GM12878 (cell line): ENCODE measurements at regions of chr11 and their contacts with region 1.

Region 1: DNA sequence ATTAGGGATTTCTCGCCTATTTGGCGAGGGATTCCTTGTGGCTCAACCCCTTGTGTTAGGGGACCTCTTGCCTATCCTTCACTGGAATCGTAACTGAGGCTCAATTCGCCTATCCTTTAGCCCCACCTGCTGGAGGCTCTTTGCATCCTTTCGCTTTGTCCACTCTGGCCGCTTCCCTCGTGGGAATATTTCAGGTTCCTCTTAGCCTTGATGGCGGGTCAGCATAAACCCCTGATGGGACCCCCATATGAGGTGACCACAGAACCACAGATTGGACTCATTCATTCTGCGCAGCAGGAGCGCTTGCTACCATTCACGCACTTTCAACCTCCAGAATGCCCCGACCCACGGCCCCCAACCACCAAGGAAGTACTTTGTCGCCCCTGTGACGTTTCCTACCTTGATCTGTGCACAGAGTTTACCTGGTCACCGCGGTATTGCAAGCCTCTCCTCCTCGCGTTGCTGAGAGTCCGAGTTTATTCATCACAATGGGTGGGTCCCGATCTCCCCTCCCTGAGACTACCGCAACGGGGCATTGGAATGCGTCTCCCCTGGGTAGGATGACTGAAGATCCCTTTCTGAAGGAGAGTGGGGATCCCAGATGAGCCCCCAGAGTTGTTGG is at the start of gene OR52N2:
- DNase-seq: peak; percentile 53
- ATAC-seq: peak; percentile 98
- H3K4me3 ChIP-seq: peak within 1 kb of the TSS; percentile 68
- H3K27ac ChIP-seq: no peak within 1 kb of the TSS
- H3K4me1 ChIP-seq: no peaks in the 10 kb centered on the region
- H3K27me3 ChIP-seq: no peaks in the 10 kb centered on the region
- CTCF ChIP-seq: peak; percentile 78 to 92 (median 83)
- EP300 ChIP-seq: no peak
- POLR2A ChIP-seq: no peak
- RAD21 ChIP-seq: peak; percentile 97
- polyA plus RNA-seq, gene OR52N2: 0.24 to 0.40 TPM

Region 2: GRCh38 chr11:5380740-5381342 is 427.8 kb before region 1 on chr11:
- CTCF ChIA-PET with region 1: no interaction called
- POLR2A ChIA-PET with region 1: no interaction called
- RAD21 ChIA-PET with region 1: no interaction called
- SMC1A ChIA-PET with region 1: no interaction called
- in situ Hi-C with region 1: no loop called
- intact Hi-C with region 1: loop called (anchors 5 kb)
- DNase-seq: no peak
- ATAC-seq: peak; percentile 98
- H3K4me3 ChIP-seq: no peak overlapping the region
- H3K27ac ChIP-seq: no peak overlapping the region
- H3K4me1 ChIP-seq: no peaks in the 10 kb centered on the region
- H3K27me3 ChIP-seq: no peaks in the 10 kb centered on the region
- CTCF ChIP-seq: peak; percentile 71 to 83 (median 80)
- EP300 ChIP-seq: no peak
- POLR2A ChIP-seq: no peak
- RAD21 ChIP-seq: peak; percentile 83

Region 3: DNA sequence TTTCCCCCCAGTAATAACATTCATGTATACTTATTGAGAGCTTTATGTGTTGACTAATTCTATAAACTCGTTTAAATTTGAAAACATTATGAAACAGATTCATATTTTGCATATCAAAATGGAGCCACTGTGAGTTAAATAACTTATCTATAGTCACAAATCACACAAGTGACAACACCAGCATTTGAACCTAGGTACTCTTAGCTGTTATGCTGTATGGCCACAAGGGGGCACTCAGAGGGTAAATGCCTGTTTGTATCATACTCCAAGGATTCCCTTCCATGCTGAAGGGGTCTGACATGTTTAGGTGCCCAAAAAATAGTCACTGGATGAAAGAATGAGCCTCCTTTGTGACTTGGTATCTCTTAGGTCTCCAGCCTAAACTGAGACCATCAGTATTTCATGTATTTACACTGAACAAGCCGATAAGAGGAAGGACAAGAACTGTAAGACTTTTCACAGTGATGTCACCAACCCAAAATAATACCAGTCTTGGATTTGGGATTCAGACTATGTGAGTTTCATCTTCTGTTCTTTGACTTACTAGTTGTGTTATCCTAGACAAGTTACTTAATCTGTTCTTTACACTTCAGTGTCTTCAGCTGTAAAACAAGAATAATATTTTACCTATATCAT is 332.3 kb before region 1 on chr11:
- CTCF ChIA-PET with region 1: interaction called, 20 read pairs
- POLR2A ChIA-PET with region 1: no interaction called
- RAD21 ChIA-PET with region 1: interaction called, 8 read pairs
- SMC1A ChIA-PET with region 1: interaction called, 8 read pairs
- in situ Hi-C with region 1: loop called (anchors 5 kb)
- intact Hi-C with region 1: loop called (anchors 1 kb)
- DNase-seq: no peak
- ATAC-seq: peak; percentile 90
- H3K4me3 ChIP-seq: no peak overlapping the region
- H3K27ac ChIP-seq: no peak overlapping the region
- H3K4me1 ChIP-seq: no peaks in the 10 kb centered on the region
- H3K27me3 ChIP-seq: no peaks in the 10 kb centered on the region; a peak in 1 of 4 replicates
- CTCF ChIP-seq: peak; percentile 69 to 83 (median 75)
- EP300 ChIP-seq: no peak
- POLR2A ChIP-seq: no peak
- RAD21 ChIP-seq: peak; percentile 72

Region 4: DNA sequence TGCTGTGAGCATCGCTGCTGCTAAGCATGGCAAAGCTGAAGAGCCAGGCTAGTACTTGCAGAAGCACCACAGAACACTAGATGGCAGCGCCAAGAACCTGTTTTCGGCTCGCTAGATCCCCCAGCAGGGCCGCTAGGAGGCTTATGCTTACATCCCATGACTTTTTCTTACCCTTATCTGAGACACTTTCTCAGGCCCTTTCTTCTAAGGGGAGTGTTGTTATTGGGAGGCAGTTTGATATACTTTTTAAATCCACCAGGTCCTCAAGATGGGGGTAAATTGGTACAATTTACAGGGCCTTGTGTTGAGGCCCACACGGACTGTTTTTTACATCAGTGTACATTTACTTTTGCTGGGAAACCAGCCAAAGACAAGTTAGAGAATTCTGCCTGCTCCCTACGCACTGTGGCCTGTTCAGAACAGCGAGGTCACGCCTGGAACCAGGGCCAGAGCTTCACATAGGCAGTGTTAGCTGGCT is 208.2 kb before region 1 on chr11:
- CTCF ChIA-PET with region 1: interaction called, 23 read pairs
- POLR2A ChIA-PET with region 1: no interaction called
- RAD21 ChIA-PET with region 1: interaction called, 8 read pairs
- SMC1A ChIA-PET with region 1: interaction called, 6 read pairs
- in situ Hi-C with region 1: loop called (anchors 5 kb)
- intact Hi-C with region 1: loop called (anchors 1 kb)
- DNase-seq: peak; percentile 23
- ATAC-seq: peak; percentile 98
- H3K4me3 ChIP-seq: no peak overlapping the region
- H3K27ac ChIP-seq: no peak overlapping the region
- H3K4me1 ChIP-seq: no peaks in the 10 kb centered on the region; the same call in 1 of the 2 replicates
- H3K27me3 ChIP-seq: no peaks in the 10 kb centered on the region
- CTCF ChIP-seq: peak; percentile 80 to 94 (median 87)
- EP300 ChIP-seq: no peak
- POLR2A ChIP-seq: no peak
- RAD21 ChIP-seq: peak; percentile 84

Region 5: DNA sequence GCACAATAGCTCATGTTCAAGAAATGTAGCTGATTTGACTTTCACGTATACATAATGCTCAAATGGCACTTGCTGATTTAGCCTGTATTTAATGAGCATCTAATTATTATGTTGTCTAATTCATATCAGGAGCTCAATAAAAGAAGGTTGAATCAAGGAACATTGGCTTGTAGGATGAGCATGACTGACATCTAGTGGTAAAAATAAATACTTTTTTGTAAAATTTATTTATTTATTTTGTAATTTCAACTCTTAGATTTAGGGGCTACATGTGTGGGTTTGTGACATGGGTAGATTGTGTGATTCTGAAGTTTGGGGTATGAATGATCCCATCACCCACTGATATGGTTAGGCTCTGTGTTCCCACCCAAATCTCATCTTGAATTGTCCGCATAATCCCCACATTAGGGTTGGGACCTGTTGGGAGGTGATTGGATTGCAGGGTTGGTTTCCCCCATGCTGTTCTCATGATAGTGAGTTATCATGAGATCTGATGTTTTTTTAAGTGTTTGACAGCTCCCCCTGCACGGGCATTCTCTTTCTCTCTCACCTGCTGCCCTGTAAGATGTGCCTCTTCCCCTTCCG is 82.7 kb after region 1 on chr11:
- CTCF ChIA-PET with region 1: interaction called, 9 read pairs
- POLR2A ChIA-PET with region 1: no interaction called
- RAD21 ChIA-PET with region 1: interaction called, 5 read pairs
- SMC1A ChIA-PET with region 1: interaction called, 10 read pairs
- in situ Hi-C with region 1: no loop called
- intact Hi-C with region 1: loop called (anchors 2 kb)
- DNase-seq: peak; percentile 0
- ATAC-seq: no peak; the same call in 2 of the 3 replicates
- H3K4me3 ChIP-seq: no peak overlapping the region
- H3K27ac ChIP-seq: no peak overlapping the region
- H3K4me1 ChIP-seq: no peaks in the 10 kb centered on the region
- H3K27me3 ChIP-seq: no peaks in the 10 kb centered on the region
- CTCF ChIP-seq: peak; percentile 8 to 38 (median 22); a peak in 4 of 6 replicates
- EP300 ChIP-seq: no peak
- POLR2A ChIP-seq: no peak
- RAD21 ChIP-seq: peak; percentile 53